PC-3 (cell line): ENCODE measurements at regions of chr4 and their contacts with region 1.

Region 1: DNA sequence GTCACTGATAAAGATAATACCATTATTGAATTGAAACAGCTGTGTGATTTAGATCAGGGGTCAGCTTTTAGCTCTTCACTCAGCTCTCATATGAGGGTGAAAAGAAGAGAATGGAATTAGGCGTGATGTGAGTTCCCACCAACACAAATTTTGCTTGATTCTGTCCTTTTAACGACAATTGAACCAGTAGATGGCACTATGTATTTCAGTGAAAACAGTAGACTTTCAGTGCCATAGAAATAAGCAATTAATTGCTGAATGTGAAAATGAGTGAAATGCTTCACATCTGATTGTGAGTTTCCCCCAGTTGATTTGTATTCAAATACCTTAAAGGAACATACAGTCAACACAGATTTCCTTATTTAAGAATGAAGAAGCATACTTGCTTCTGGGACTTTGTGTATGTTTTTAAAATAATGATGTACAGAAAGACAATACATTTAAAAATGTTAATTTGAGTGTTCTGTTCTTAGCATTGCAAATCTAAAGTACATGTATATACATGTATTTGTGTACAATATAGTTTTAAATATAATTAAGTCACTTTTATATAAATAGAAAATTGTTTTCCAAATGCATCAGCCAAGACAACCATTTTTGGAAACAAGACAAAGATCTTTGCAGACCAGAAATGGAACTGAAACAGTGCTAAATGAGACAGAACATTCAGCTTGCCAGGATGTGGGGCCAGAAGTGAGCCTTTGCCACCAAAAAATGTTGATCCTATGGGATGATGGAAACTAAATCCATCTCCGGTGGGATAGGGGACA is 178.8 kb downstream of the SNCA start:
- DNase-seq: peak; percentile 29
- ATAC-seq: no peak; the same call in 1 of the 2 replicates
- H3K4me3 ChIP-seq: no peak overlapping the region
- H3K27ac ChIP-seq: no peak overlapping the region
- H3K4me1 ChIP-seq: no peaks in the 10 kb centered on the region
- H3K27me3 ChIP-seq: peaks cover 31% of the 10 kb centered on the region
- CTCF ChIP-seq: peak; percentile 52; the same call in 1 of the 2 replicates

Region 2: GRCh38 chr4:89800012-89800516 is 141.9 kb after region 1 on chr4:
- CTCF ChIA-PET with region 1: no interaction called
- POLR2A ChIA-PET with region 1: no interaction called
- intact Hi-C with region 1: loop called (anchors 5 kb)
- DNase-seq: peak; percentile 72
- ATAC-seq: peak; percentile 74
- H3K4me3 ChIP-seq: peak overlapping the region; percentile 52; the same call in 1 of the 2 replicates
- H3K27ac ChIP-seq: peak overlapping the region; percentile 100
- H3K4me1 ChIP-seq: peaks cover 26% of the 10 kb centered on the region
- H3K27me3 ChIP-seq: no peaks in the 10 kb centered on the region
- CTCF ChIP-seq: no peak

Region 3: GRCh38 chr4:89868999-89869589 is 211.0 kb after region 1 on chr4:
- CTCF ChIA-PET with region 1: no interaction called
- POLR2A ChIA-PET with region 1: no interaction called
- intact Hi-C with region 1: loop called (anchors 5 kb)
- DNase-seq: peak; percentile 32
- ATAC-seq: no peak
- H3K4me3 ChIP-seq: no peak overlapping the region
- H3K27ac ChIP-seq: no peak overlapping the region
- H3K4me1 ChIP-seq: no peaks in the 10 kb centered on the region
- H3K27me3 ChIP-seq: peaks cover 34% of the 10 kb centered on the region
- CTCF ChIP-seq: peak; percentile 71

Region 4: GRCh38 chr4:89898304-89898716 is 240.2 kb after region 1 on chr4:
- CTCF ChIA-PET with region 1: no interaction called
- POLR2A ChIA-PET with region 1: no interaction called
- intact Hi-C with region 1: loop called (anchors 2 kb)
- DNase-seq: no peak
- ATAC-seq: no peak
- H3K4me3 ChIP-seq: no peak overlapping the region
- H3K27ac ChIP-seq: no peak overlapping the region
- H3K4me1 ChIP-seq: no peaks in the 10 kb centered on the region
- H3K27me3 ChIP-seq: peaks cover 57% of the 10 kb centered on the region
- CTCF ChIP-seq: no peak

Region 5: DNA sequence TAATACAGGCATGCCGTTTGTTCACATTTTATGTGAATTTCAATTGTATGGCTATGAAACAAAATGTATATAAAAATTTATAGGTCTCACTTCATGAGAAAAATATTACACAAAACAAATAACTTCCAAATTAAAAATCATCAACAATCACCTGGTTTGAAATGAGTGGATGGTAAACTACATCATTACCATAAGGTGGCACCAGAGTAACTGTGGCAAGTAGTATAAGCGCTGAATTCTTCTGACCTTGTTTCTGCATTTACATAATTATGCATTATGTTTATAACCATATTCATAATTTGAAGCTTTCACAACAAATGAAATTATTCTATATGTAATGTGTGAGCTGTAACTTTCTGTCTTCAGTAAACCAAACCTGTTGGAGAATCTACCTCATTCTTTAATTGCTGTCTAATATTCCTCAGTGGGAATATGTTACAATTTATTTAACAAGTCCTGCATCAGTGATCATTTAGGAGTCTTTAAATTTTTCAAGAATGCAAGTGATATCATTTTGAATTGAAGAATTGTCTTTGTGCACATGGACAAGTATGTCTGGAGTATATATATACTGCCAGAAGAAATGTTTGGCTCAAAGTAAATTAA is 291.8 kb after region 1 on chr4:
- CTCF ChIA-PET with region 1: no interaction called
- POLR2A ChIA-PET with region 1: no interaction called
- intact Hi-C with region 1: no loop called
- DNase-seq: peak; percentile 50
- ATAC-seq: 0 out of 2 replicates have a peak, but pooled peaks have one; percentile 50
- H3K4me3 ChIP-seq: no peak overlapping the region
- H3K27ac ChIP-seq: no peak overlapping the region
- H3K4me1 ChIP-seq: no peaks in the 10 kb centered on the region
- H3K27me3 ChIP-seq: peaks cover 59% of the 10 kb centered on the region
- CTCF ChIP-seq: peak; percentile 86